ENCODE measurements at regions of chr21 and their contacts with region 1.

Region 1: GRCh38 chr21:37366482-37367316 is at the start of gene DYRK1A:
- DNase-seq: peak; percentile 97
- H3K4me3 Mint-ChIP-seq: peak within 1 kb of the TSS; percentile 98
- H3K27ac Mint-ChIP-seq: peak within 1 kb of the TSS; percentile 99
- H3K4me1 Mint-ChIP-seq: peaks cover 44% of the 10 kb centered on the region
- H3K27me3 Mint-ChIP-seq: peaks cover 2% of the 10 kb centered on the region
- total RNA-seq, gene DYRK1A: 66.5 and 68.1 TPM in 2 replicates

Region 2: DNA sequence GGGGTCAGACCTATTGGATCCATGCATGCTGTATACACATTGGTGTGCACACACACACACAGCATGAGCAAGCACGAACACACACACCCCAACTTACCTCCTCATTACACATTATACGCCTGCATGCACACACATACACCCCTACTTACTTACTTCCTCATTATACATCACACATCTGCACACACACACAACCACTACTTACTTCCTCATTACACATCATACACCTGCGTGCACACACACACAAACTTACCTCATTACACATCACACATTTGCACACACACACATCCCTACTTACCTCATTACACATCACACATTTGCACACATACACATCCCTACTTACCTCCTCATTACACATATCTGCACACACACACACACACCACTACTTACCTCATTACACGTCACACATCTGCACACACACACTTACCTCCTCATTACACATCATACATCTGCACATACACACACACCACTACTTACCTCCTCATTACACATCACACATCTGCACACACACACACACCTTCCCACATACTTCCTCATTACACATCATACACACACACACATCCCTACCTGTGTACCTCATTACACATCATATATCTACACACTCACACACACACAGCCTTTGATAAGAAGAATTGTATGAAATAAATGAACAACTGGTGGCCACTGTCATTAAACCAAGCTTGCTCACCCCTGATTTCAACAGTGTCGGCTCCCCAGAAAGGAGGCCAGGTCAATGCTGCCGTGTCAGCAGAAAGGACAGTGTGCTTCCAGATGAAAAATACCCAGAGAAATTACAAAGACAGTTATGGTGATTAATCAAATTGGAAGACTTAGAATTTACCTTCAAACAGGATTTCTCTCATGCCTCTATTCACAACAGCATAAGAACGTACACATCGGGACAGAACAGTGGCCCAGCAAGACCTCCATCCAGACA is 1424.2 kb before region 1 on chr21:
- intact Hi-C with region 1: no loop called
- DNase-seq: no peak
- H3K4me3 Mint-ChIP-seq: no peak overlapping the region
- H3K27ac Mint-ChIP-seq: no peak overlapping the region
- H3K4me1 Mint-ChIP-seq: no peaks in the 10 kb centered on the region
- H3K27me3 Mint-ChIP-seq: peaks cover 8% of the 10 kb centered on the region

Region 3: GRCh38 chr21:37072988-37073416 is 293.7 kb before region 1 on chr21 and contains the starts of genes PIGP and TTC3:
- intact Hi-C with region 1: loop called (anchors 1 kb)
- DNase-seq: peak; percentile 93
- H3K4me3 Mint-ChIP-seq: peak within 1 kb of the TSS; percentile 95
- H3K27ac Mint-ChIP-seq: peak within 1 kb of the TSS; percentile 95
- H3K4me1 Mint-ChIP-seq: peaks cover 50% of the 10 kb centered on the region
- H3K27me3 Mint-ChIP-seq: peaks cover 2% of the 10 kb centered on the region
- total RNA-seq, gene PIGP: 18.2 and 20.1 TPM in 2 replicates
- total RNA-seq, gene TTC3: 61.8 and 69.3 TPM in 2 replicates

Region 4: GRCh38 chr21:37257967-37258877 is 108.5 kb before region 1 on chr21:
- intact Hi-C with region 1: loop called (anchors 1 kb)
- DNase-seq: peak; percentile 83
- H3K4me3 Mint-ChIP-seq: peak overlapping the region; percentile 95
- H3K27ac Mint-ChIP-seq: peak overlapping the region; percentile 100
- H3K4me1 Mint-ChIP-seq: peaks cover 56% of the 10 kb centered on the region
- H3K27me3 Mint-ChIP-seq: peaks cover 2% of the 10 kb centered on the region

Region 5: GRCh38 chr21:37378700-37379139 is 12.0 kb after region 1 on chr21:
- intact Hi-C with region 1: loop called (anchors 1 kb)
- DNase-seq: no peak
- H3K4me3 Mint-ChIP-seq: peak overlapping the region; percentile 2
- H3K27ac Mint-ChIP-seq: no peak overlapping the region
- H3K4me1 Mint-ChIP-seq: peaks cover 72% of the 10 kb centered on the region
- H3K27me3 Mint-ChIP-seq: no peaks in the 10 kb centered on the region

Region 6: GRCh38 chr21:37435120-37435519 is 68.4 kb after region 1 on chr21:
- intact Hi-C with region 1: loop called (anchors 1 kb)
- DNase-seq: peak; percentile 50
- H3K4me3 Mint-ChIP-seq: no peak overlapping the region
- H3K27ac Mint-ChIP-seq: no peak overlapping the region
- H3K4me1 Mint-ChIP-seq: peaks cover 45% of the 10 kb centered on the region
- H3K27me3 Mint-ChIP-seq: no peaks in the 10 kb centered on the region

Region 7: GRCh38 chr21:38244885-38245545 is 878.3 kb after region 1 on chr21:
- intact Hi-C with region 1: loop called (anchors 5 kb)
- DNase-seq: peak; percentile 53
- H3K4me3 Mint-ChIP-seq: peak overlapping the region; percentile 30
- H3K27ac Mint-ChIP-seq: peak overlapping the region; percentile 74
- H3K4me1 Mint-ChIP-seq: peaks cover 39% of the 10 kb centered on the region
- H3K27me3 Mint-ChIP-seq: peaks cover 5% of the 10 kb centered on the region